HCT116 (cell line): ENCODE measurements at regions of chr9 and their contacts with region 1.

Region 1: DNA sequence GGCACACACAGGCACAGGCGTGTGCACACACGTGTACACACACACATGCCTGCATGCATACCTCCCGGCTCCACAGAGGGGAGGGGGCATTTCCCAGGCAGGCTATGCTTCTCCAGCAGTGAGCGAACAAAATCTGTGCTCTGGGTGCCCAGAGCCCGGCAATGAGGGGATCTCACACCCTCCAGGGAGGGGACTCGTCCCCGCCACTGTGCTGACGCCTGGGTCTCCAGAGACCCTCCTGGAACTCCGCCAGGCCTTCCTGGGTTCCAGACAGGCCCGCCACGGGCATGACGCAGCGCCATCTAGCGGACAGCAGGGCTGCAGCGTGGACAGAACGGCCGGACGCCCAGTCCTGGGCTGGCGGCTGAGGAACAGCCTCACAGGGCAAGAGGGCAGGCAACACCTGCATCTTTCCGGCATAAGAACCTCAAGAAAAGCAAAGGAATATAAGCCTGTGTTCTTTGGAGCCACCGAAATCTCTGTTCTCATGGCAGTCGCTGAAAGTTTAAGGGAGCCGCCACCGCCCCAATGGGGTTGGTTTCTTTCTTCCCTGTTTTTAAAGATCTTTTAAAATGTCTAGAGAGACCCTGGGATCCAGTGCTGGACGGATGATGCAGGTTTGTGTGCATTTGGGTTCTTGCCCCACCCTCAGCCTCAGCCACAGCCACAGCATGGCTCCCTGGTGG is 135.6 kb upstream of the PPP1R26 start:
- DNase-seq: peak; percentile 10
- ATAC-seq: peak; percentile 92
- H3K4me3 ChIP-seq: no peak overlapping the region
- H3K27ac ChIP-seq: no peak overlapping the region
- H3K4me1 ChIP-seq: no peaks in the 10 kb centered on the region
- H3K27me3 ChIP-seq: no peaks in the 10 kb centered on the region
- CTCF ChIP-seq: peak; percentile 92 to 99 (median 98)
- POLR2A ChIP-seq: no peak
- RAD21 ChIP-seq: peak; percentile 93

Region 2: DNA sequence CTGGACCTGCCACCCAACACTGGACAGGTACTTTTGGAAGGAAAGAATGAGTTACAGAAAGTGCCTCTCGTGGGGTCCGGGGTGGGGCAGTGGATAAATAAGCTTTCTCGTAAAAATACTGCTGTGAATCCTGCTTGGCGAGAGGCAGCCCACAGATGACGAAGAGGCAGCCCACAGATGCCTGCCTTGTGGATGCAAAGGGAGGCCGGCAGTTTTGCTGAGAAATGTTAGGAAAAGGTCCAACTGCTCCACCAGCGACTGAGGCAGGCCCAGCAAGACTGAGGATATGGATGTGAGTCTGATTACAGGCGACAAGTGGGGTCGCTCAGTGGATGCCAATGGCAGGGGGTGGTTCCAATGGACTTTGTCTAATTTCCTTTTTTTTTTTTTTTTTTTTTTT is 56.5 kb after region 1 on chr9:
- CTCF ChIA-PET with region 1: no interaction called
- POLR2A ChIA-PET with region 1: no interaction called
- RAD21 ChIA-PET with region 1: no interaction called
- intact Hi-C with region 1: no loop called
- DNase-seq: no peak
- ATAC-seq: no peak
- H3K4me3 ChIP-seq: no peak overlapping the region
- H3K27ac ChIP-seq: no peak overlapping the region
- H3K4me1 ChIP-seq: peaks cover 0 to 11% of the 10 kb centered on the region in 2 experiments; a peak in 1 of 4 replicates
- H3K27me3 ChIP-seq: no peaks in the 10 kb centered on the region
- CTCF ChIP-seq: no peak
- POLR2A ChIP-seq: no peak
- RAD21 ChIP-seq: no peak

Region 3: GRCh38 chr9:135410831-135411473 is 67.0 kb after region 1 on chr9:
- CTCF ChIA-PET with region 1: no interaction called
- POLR2A ChIA-PET with region 1: no interaction called
- RAD21 ChIA-PET with region 1: no interaction called
- intact Hi-C with region 1: loop called (anchors 1 kb)
- DNase-seq: no peak
- ATAC-seq: no peak
- H3K4me3 ChIP-seq: no peak overlapping the region
- H3K27ac ChIP-seq: no peak overlapping the region
- H3K4me1 ChIP-seq: peaks cover 3 to 4% of the 10 kb centered on the region in 2 experiments; a peak in 2 of 4 replicates
- H3K27me3 ChIP-seq: peaks cover 14% of the 10 kb centered on the region; the same call in 1 of the 2 replicates
- CTCF ChIP-seq: no peak
- POLR2A ChIP-seq: no peak
- RAD21 ChIP-seq: no peak